Head of caudate nucleus (tissue), 42 donors: ENCODE measurements at regions of chr17 and their contacts with region 1.

Region 1: GRCh38 chr17:55527540-55528118 is 16.4 kb upstream of the SMIM36 start:
- DNase-seq: peak in 31 of 42 donors; percentile 11 to 72 (median 41)

Region 2: DNA sequence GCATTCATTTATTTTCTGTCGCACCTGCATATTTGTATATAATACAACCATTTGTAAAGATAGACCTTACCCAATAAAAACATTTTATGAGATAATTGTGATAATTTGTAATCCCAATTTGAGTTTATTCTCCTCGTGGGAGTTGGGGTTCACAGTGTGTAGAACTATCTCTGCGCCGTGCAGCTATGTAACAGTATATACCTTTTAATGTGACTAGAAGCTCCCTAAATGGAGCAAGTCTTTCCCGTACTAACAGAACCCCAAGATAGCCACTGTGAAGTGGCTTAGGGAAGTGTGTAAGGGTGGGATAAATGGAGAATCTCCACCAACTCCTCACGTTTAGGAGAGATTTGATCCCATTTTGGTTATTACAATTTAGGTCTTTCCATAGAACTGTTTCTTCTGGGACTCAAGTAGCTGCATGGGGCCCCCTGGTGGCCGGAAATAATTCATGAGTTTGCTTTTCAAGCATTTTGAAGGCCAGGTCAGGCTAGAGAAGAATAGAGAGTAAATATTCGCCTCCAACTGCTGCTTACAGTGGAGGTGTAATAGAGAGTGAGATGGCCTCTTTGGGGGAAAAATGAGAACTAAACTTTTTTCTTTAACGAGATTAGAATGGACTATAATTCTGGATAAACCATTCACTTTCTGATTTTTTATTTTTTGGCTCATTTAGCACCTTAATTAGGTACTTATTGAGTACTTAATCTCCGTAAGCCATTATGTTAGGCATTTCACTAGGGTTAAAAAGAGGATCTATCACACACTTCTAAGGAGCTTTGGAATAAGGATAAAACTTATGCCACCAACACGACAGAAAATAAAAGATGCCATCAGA is 190.5 kb after region 1 on chr17:
- intact Hi-C with region 1: loop called (anchors 10 kb)
- DNase-seq: peak; percentile 54 to 91 (median 78)

Region 3: GRCh38 chr17:55770148-55770870 is 242.7 kb after region 1 on chr17:
- intact Hi-C with region 1: loop called (anchors 5 kb)
- DNase-seq: no peak